A673 (cell line): ENCODE measurements at regions of chr15 and their contacts with region 1.

Region 1: GRCh38 chr15:33910741-33911140 is 57.6 kb upstream of the CHRM5 start:
- DNase-seq: no peak
- H3K4me3 ChIP-seq: no peak overlapping the region
- H3K27ac ChIP-seq: no peak overlapping the region
- H3K4me1 ChIP-seq: no peaks in the 10 kb centered on the region
- H3K27me3 ChIP-seq: no peaks in the 10 kb centered on the region
- CTCF ChIP-seq: no peak

Region 2: DNA sequence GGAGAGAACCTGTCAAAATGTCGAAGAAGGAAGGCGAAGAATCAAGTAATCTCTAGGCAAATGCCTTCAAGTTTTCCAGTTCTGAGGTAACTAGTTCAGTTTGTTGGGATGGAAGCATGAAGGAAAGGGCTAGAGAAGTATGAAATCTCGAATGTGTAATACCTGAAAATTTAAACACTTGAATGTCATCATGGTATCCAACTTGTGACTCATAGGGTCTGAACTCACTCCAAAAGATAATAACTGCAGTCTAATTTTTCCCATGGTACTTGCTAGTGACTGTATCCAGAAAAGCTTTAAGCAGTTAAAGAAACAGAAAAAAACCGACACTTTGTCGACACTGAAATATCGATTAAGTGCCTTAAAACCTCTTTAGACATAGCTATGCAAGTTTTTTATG is 45.3 kb before region 1 on chr15:
- CTCF ChIA-PET with region 1: no interaction called
- POLR2A ChIA-PET with region 1: interaction called, 15 read pairs
- intact Hi-C with region 1: no loop called
- DNase-seq: no peak
- H3K4me3 ChIP-seq: no peak overlapping the region
- H3K27ac ChIP-seq: no peak overlapping the region
- H3K4me1 ChIP-seq: no peaks in the 10 kb centered on the region
- H3K27me3 ChIP-seq: no peaks in the 10 kb centered on the region
- CTCF ChIP-seq: no peak

Region 3: GRCh38 chr15:34284937-34285336 is 374.2 kb after region 1 on chr15:
- CTCF ChIA-PET with region 1: no interaction called
- POLR2A ChIA-PET with region 1: no interaction called
- intact Hi-C with region 1: no loop called
- DNase-seq: no peak
- H3K4me3 ChIP-seq: no peak overlapping the region
- H3K27ac ChIP-seq: no peak overlapping the region
- H3K4me1 ChIP-seq: no peaks in the 10 kb centered on the region
- H3K27me3 ChIP-seq: no peaks in the 10 kb centered on the region
- CTCF ChIP-seq: no peak